ENCODE measurements at regions of chr4 and their contacts with region 1.

Region 1: GRCh38 chr4:54683616-54684346 is 26.0 kb downstream of the KIT start:
- DNase-seq: peak; percentile 15
- H3K4me3 Mint-ChIP-seq: no peak overlapping the region
- H3K27ac Mint-ChIP-seq: no peak overlapping the region
- H3K4me1 Mint-ChIP-seq: peaks cover 6% of the 10 kb centered on the region
- H3K27me3 Mint-ChIP-seq: no peaks in the 10 kb centered on the region

Region 2: DNA sequence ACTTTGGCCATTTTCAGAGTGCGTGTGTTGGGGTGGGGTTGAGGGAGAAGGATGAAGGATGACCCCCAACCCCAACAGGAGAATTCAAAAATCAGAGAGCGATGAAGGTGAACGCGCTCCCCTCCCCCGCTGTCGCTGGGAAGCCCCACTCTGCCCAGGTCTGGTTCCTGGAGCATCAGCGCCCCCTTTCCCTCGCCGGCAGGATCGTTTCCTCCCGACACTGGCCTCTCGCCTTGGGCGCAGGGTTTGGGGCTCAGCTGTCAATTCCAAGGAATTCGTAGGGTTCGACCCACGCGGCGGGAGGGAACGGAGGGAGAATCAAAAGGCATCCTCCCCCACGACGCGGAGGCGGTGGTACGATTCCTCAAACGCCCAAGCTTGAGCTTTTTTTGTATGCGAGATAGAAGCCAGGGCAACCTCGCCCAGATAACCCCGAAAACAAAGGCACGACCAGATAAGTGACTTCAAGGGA is 455.7 kb before region 1 on chr4:
- intact Hi-C with region 1: no loop called
- DNase-seq: no peak
- H3K4me3 Mint-ChIP-seq: peak overlapping the region; percentile 47
- H3K27ac Mint-ChIP-seq: peak overlapping the region; percentile 75
- H3K4me1 Mint-ChIP-seq: peaks cover 6% of the 10 kb centered on the region
- H3K27me3 Mint-ChIP-seq: peaks cover 80% of the 10 kb centered on the region

Region 3: GRCh38 chr4:54961357-54961975 is 277.7 kb after region 1 on chr4:
- intact Hi-C with region 1: loop called (anchors 1 kb)
- DNase-seq: no peak
- H3K4me3 Mint-ChIP-seq: no peak overlapping the region
- H3K27ac Mint-ChIP-seq: no peak overlapping the region
- H3K4me1 Mint-ChIP-seq: peaks cover 6% of the 10 kb centered on the region
- H3K27me3 Mint-ChIP-seq: peaks cover 8% of the 10 kb centered on the region